A549 (cell line): ENCODE measurements at regions of chr1 and their contacts with region 1.

Region 1: DNA sequence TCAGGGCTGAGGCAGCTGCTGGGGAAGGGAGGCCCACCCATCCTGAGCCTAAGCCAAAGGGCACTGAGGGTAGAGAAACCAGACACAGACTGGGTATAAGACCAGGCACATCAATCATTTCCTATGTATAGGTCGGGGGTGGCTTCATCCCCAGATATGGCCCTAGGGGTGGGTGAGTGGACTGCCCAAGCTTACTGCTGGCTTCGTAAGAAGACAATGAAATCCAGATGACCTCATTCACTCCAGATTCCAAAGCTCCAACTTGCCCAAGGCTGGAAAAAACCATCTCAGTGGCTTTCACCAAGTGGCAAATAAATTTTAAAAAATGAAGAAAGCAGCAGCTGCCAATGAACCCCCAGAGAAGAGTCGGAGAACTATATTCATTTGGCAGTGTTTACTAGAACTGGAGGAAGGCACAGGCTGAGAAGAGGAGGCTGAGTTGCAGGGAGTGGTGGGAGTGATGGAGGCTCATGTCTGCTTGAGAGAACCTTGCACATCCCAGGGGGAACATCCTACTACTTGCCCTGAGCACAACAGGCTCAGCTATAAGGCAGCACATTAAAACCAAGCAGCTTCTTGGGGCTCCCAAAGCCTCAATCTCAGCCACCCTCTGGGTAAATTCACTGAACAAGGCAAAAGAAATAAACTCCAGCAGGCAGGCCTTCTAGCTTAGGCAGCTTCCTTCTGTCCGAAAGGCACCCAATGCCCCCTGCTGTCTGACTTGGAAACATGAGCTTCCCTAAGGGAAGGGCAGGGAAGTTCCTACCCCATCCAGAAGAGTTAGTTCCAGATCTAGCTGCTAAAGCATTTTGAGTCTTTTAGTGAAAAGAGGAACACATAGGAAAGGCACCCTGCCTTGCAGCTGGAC is 14.1 kb downstream of the PEA15 start:
- DNase-seq: peak; percentile 55 to 70
- ATAC-seq: peak; percentile 87 to 88
- H3K4me3 ChIP-seq: no peak overlapping the region
- H3K27ac ChIP-seq: 0 out of 6 replicates have a peak overlapping the region, but pooled peaks of 1 of the 2 experiments have one; percentile 5
- H3K4me1 ChIP-seq: peaks cover 19% of the 10 kb centered on the region; the same call in 2 of the 3 replicates
- CTCF ChIP-seq: peak; percentile 61
- EP300 ChIP-seq: no peak
- POLR2A ChIP-seq: no peak
- RAD21 ChIP-seq: peak; percentile 72 to 74

Region 2: DNA sequence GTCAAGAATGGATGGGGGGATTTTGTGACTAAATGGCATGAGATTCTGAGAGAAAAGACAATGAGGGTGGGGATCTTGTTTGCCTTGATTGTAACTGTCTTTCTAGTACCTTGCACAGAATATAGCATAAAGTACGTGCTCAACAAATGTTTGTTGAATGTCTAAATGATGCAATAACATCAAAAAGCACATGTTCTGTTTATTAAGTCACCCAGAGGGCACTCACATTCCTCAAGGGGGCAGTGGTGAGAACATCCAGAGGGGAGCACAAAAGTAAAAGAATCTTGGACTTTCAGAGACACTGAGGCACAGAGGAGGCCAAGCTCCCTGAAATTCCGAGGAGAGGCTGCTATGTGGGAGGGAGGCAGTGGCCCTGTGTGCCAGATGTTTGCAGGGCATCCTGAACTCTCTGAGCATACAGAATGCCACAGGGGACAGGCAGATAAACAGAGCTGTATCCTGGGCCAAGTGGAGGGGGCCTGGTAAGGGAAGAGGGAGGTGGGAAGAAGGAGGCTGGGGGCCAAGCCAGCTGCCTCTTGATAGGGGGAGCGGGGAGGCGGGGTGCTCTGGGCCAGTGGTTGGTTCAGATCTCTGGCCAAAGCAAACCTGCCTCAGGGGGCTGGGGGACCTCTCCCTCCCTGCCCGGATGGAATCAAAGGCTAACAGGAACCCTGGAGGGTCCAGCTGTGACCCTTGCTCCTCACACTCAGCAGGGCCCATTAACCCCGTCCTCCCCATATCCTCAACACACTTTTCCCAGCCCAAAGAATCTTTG is 110.2 kb before region 1 on chr1:
- CTCF ChIA-PET with region 1: interaction called, 128 read pairs
- POLR2A ChIA-PET with region 1: no interaction called
- DNase-seq: peak; percentile 75 to 80
- ATAC-seq: peak; percentile 40 to 68; a peak in 4 of 6 replicates
- H3K4me3 ChIP-seq: no peak overlapping the region
- H3K27ac ChIP-seq: peak overlapping the region; percentile 77 to 83
- H3K4me1 ChIP-seq: peaks cover 20% of the 10 kb centered on the region
- CTCF ChIP-seq: peak; percentile 57
- EP300 ChIP-seq: peak in 1 of 2 experiments; percentile 34; a peak in 1 of 5 replicates
- POLR2A ChIP-seq: no peak
- RAD21 ChIP-seq: peak; percentile 27 to 35; a peak in 3 of 5 replicates

Region 3: GRCh38 chr1:160205242-160206035 is 13.9 kb before region 1 on chr1 and contains the start of gene PEA15:
- CTCF ChIA-PET with region 1: interaction called, 43 read pairs
- POLR2A ChIA-PET with region 1: interaction called, 3 read pairs
- DNase-seq: peak; percentile 60 to 87
- ATAC-seq: peak; percentile 72 to 81
- H3K4me3 ChIP-seq: peak within 1 kb of the TSS; percentile 88
- H3K27ac ChIP-seq: peak within 1 kb of the TSS; percentile 89 to 96
- H3K4me1 ChIP-seq: peaks cover 45% of the 10 kb centered on the region
- CTCF ChIP-seq: no peak
- EP300 ChIP-seq: no peak
- POLR2A ChIP-seq: peak; percentile 20; the same call in 1 of the 2 replicates
- RAD21 ChIP-seq: no peak
- polyA plus RNA-seq, gene PEA15: 115 and 130 TPM in 2 replicates

Region 4: DNA sequence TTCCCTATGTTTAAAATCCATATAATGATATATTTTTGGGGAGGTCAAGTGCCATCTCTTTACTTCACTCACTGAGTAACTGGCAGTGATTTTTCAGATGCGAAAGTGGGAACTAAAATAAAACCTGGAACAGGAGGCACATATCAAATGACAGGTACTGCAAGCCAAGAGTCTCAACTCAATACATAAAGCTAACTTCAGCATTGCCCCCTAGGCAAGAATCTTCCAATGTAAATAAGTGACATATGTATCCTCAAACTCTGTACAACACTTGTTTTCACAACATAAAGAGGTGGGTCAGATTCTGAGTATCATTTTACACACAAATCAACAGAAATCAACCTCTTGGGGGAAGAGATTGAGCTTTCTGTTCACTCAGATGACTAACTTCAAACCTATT is 24.9 kb after region 1 on chr1:
- CTCF ChIA-PET with region 1: interaction called, 20 read pairs
- POLR2A ChIA-PET with region 1: interaction called, 14 read pairs
- DNase-seq: no peak
- ATAC-seq: no peak
- H3K4me3 ChIP-seq: no peak overlapping the region
- H3K27ac ChIP-seq: no peak overlapping the region
- H3K4me1 ChIP-seq: peaks cover 16% of the 10 kb centered on the region
- CTCF ChIP-seq: no peak
- EP300 ChIP-seq: no peak
- POLR2A ChIP-seq: no peak
- RAD21 ChIP-seq: no peak

Region 5: GRCh38 chr1:160483505-160484185 is 264.3 kb after region 1 on chr1:
- CTCF ChIA-PET with region 1: no interaction called
- POLR2A ChIA-PET with region 1: no interaction called
- DNase-seq: no peak
- ATAC-seq: no peak
- H3K4me3 ChIP-seq: no peak overlapping the region
- H3K27ac ChIP-seq: no peak overlapping the region
- H3K4me1 ChIP-seq: no peaks in the 10 kb centered on the region
- CTCF ChIP-seq: no peak
- EP300 ChIP-seq: no peak
- POLR2A ChIP-seq: no peak
- RAD21 ChIP-seq: no peak